Naive thymus-derived CD4-positive, alpha-beta T cell (primary cell): ENCODE measurements at regions of chr6 and their contacts with region 1.

Region 1: DNA sequence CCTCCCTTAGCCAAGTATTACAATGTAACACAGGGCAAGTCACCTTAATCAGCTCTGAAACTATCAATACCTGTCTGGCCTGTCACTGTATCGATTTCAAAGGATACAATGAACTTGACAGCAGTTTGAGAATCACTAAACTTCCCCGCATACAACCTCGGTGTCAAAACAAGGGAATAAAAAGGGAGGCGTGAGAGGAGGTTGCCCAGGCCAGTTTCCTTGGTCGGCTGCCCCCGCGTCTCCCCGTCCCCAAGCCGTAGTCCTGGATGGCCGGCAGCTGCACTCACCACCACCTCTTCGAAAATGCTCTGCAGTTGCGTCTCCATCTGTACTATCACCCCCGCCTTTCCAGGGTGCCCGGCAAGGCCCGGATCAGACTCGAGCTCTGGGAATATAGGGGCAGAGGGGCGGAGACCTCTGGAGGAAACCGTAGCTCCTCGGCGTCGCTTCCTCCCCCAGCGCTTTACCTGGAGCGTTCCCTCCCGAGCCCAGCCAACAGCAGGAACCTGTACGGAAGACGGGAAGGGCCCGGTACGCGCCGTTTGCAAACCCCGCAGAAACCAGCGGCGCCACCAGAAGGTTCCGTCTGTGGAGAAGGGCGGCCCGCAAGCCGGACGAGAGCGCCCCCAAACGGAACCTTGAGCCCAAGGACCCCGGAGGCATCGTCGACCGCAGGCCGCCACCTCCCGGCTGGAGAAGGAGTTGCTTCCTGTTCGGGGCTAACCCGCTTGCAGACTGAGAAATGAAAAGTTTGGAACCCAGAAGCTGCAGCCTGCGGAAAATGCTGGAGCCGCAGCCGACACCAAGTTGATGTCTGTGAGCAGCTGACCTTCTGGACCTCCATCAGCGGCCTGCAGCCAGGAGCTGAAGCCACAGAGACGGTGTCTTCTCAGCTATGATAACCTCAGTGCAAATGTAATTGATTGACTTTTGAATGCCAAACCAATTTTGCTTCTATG is at the start of gene MED23:
- DNase-seq: peak; percentile 85 to 98 (median 94)
- ATAC-seq: peak; percentile 99
- H3K4me3 ChIP-seq: peak within 1 kb of the TSS; percentile 92
- H3K4me3 Mint-ChIP-seq: peak within 1 kb of the TSS; percentile 95 to 100 (median 98)
- H3K27ac ChIP-seq: peak within 1 kb of the TSS; percentile 75
- H3K27ac Mint-ChIP-seq: peak within 1 kb of the TSS; percentile 93 to 96 (median 95)
- H3K4me1 ChIP-seq: peaks cover 16 to 18% of the 10 kb centered on the region in 2 donors
- H3K4me1 Mint-ChIP-seq: peaks cover 20 to 51% (median 46%) of the 10 kb centered on the region in 7 donors
- H3K27me3 ChIP-seq: no peaks in the 10 kb centered on the region
- H3K27me3 Mint-ChIP-seq: peaks cover 0 to 2% (median 0%) of the 10 kb centered on the region in 5 donors
- total RNA-seq, gene MED23: 35.7 to 59.1 (median 55.4) TPM

Region 2: DNA sequence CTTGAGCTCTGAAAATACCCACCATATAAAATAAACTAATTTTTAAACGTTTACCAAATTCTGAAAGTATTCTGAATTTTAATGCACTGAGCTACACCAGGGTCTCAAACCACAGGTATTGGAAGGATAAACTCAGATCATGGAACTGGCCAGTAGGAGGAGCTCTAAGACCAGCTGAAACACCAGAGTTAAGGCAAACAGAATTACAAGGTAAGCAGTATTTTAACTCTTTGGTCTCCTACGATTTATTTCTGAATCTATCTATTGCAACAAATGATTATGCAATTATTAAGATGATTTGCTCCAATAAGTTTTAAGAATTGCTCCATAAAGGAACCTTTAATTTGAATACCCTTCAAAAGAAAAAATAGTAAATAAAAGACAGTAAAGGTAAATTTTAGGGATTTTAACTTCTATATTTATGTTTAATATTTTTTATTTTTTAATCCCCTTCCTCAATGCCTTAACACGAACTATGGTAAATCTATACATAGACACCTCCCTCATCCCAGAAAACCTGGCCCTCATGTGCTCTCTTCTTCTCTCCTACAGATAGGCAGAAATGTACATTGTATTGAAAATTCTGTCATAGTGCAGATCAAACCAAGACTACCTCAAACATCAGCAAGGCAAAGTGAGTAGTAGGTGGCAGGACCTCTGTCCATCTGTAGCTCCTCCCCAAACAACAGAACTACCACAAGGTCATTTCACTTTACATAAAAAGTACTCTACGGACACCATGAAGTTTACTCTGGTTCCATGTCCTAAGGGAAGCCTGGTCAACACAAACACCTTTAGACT is 742.4 kb before region 1 on chr6:
- CTCF ChIA-PET with region 1: interaction called, 29 read pairs
- POLR2A ChIA-PET with region 1: no interaction called
- intact Hi-C with region 1: loop called (anchors 1 kb)
- DNase-seq: peak; percentile 27 to 82 (median 73)
- ATAC-seq: peak; percentile 97
- H3K4me3 ChIP-seq: no peak overlapping the region
- H3K4me3 Mint-ChIP-seq: no peak overlapping the region
- H3K27ac ChIP-seq: no peak overlapping the region
- H3K27ac Mint-ChIP-seq: peak overlapping the region in 1 of 9 donors; percentile 3
- H3K4me1 ChIP-seq: no peaks in the 10 kb centered on the region
- H3K4me1 Mint-ChIP-seq: no peaks in the 10 kb centered on the region
- H3K27me3 ChIP-seq: no peaks in the 10 kb centered on the region
- H3K27me3 Mint-ChIP-seq: no peaks in the 10 kb centered on the region

Region 3: GRCh38 chr6:131135244-131136020 is 492.6 kb before region 1 on chr6 and contains the start of gene AKAP7:
- CTCF ChIA-PET with region 1: interaction called, 3 read pairs
- POLR2A ChIA-PET with region 1: no interaction called
- intact Hi-C with region 1: loop called (anchors 1 to 2 kb)
- DNase-seq: peak; percentile 42 to 67 (median 61)
- ATAC-seq: peak; percentile 81
- H3K4me3 ChIP-seq: peak within 1 kb of the TSS; percentile 73
- H3K4me3 Mint-ChIP-seq: peak within 1 kb of the TSS; percentile 87 to 99 (median 94)
- H3K27ac ChIP-seq: peak within 1 kb of the TSS; percentile 75
- H3K27ac Mint-ChIP-seq: peak within 1 kb of the TSS; percentile 93 to 99 (median 96)
- H3K4me1 ChIP-seq: peaks cover 0 to 9% of the 10 kb centered on the region in 2 donors
- H3K4me1 Mint-ChIP-seq: peaks cover 18 to 50% (median 33%) of the 10 kb centered on the region in 7 donors
- H3K27me3 ChIP-seq: no peaks in the 10 kb centered on the region
- H3K27me3 Mint-ChIP-seq: peaks cover 0 to 21% (median 0%) of the 10 kb centered on the region in 5 donors
- total RNA-seq, gene AKAP7: 6.5 to 20.2 (median 12.4) TPM

Region 4: DNA sequence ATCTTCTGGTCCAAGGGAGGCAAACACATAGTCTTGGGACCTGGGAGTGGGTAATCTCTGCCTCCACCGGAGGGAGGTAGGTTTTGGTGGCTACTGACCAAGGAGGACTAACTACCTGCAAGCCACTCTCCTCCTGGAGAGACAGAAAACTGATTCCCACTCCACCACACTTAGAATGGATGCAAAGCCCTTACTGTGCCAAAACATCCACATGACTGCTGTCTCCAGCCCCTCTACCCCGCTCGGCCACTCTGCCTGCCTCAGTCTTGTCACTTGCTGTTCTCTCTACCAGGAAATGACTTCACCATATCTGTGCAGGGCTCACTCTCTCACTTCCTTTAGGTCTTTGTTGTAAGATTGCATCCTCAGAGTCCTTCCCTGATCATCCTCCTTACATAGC is 184.5 kb before region 1 on chr6:
- CTCF ChIA-PET with region 1: no interaction called
- POLR2A ChIA-PET with region 1: no interaction called
- intact Hi-C with region 1: loop called in 1 of 2 experiments (anchors 5 kb)
- DNase-seq: peak in 7 of 9 donors; percentile 38 to 53 (median 49)
- ATAC-seq: peak; percentile 80
- H3K4me3 ChIP-seq: peak overlapping the region; percentile 70
- H3K4me3 Mint-ChIP-seq: peak overlapping the region; percentile 82 to 97 (median 92)
- H3K27ac ChIP-seq: peak overlapping the region; percentile 60
- H3K27ac Mint-ChIP-seq: peak overlapping the region; percentile 85 to 97 (median 93)
- H3K4me1 ChIP-seq: peaks cover 0 to 18% of the 10 kb centered on the region in 2 donors
- H3K4me1 Mint-ChIP-seq: peaks cover 23 to 91% (median 75%) of the 10 kb centered on the region in 7 donors
- H3K27me3 ChIP-seq: no peaks in the 10 kb centered on the region
- H3K27me3 Mint-ChIP-seq: no peaks in the 10 kb centered on the region

Region 5: DNA sequence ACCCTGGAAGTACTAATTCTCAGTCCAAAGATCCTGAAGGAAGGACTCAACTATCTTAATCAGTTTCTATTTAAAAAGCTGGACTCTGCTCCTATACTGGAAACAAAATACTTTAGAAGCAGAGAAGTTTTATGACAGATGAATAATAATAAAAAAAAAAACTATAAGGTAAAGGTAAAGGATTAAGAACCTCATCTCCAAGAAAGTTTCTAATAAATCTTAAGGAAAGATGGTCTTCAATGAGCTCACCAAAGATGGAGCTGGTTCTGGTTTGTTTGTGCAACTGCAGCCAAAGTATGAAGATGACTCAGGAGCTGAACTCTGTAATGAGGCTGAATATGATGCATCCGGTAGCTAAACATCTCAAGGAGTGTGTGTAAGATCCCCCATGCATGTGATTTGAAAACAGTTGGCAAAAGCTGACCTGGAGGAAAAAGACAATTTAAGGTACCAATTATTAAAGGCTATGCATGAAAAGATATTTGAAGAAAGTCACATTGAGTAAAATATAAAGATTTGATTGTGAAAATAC is 25.2 kb before region 1 on chr6:
- CTCF ChIA-PET with region 1: interaction called, 11 read pairs
- POLR2A ChIA-PET with region 1: interaction called, 3 read pairs
- intact Hi-C with region 1: no loop called
- DNase-seq: no peak
- ATAC-seq: no peak
- H3K4me3 ChIP-seq: no peak overlapping the region
- H3K4me3 Mint-ChIP-seq: no peak overlapping the region
- H3K27ac ChIP-seq: no peak overlapping the region
- H3K27ac Mint-ChIP-seq: peak overlapping the region in 1 of 9 donors; percentile 3
- H3K4me1 ChIP-seq: no peaks in the 10 kb centered on the region
- H3K4me1 Mint-ChIP-seq: peaks cover 0 to 2% (median 0%) of the 10 kb centered on the region in 7 donors
- H3K27me3 ChIP-seq: no peaks in the 10 kb centered on the region
- H3K27me3 Mint-ChIP-seq: no peaks in the 10 kb centered on the region